ENCODE measurements at regions of chr2 and their contacts with region 1.

Region 1: GRCh38 chr2:228681426-228681825 is 499.9 kb upstream of the SPHKAP start:
- DNase-seq: no peak
- H3K4me3 Mint-ChIP-seq: no peak overlapping the region
- H3K27ac Mint-ChIP-seq: no peak overlapping the region
- H3K4me1 Mint-ChIP-seq: no peaks in the 10 kb centered on the region
- H3K27me3 Mint-ChIP-seq: no peaks in the 10 kb centered on the region
- CTCF ChIP-seq: peak; percentile 26

Region 2: GRCh38 chr2:228777855-228778355 is 96.5 kb after region 1 on chr2:
- CTCF ChIA-PET with region 1: no interaction called
- intact Hi-C with region 1: no loop called
- DNase-seq: no peak
- H3K4me3 Mint-ChIP-seq: no peak overlapping the region
- H3K27ac Mint-ChIP-seq: no peak overlapping the region
- H3K4me1 Mint-ChIP-seq: no peaks in the 10 kb centered on the region
- H3K27me3 Mint-ChIP-seq: no peaks in the 10 kb centered on the region
- CTCF ChIP-seq: no peak

Region 3: DNA sequence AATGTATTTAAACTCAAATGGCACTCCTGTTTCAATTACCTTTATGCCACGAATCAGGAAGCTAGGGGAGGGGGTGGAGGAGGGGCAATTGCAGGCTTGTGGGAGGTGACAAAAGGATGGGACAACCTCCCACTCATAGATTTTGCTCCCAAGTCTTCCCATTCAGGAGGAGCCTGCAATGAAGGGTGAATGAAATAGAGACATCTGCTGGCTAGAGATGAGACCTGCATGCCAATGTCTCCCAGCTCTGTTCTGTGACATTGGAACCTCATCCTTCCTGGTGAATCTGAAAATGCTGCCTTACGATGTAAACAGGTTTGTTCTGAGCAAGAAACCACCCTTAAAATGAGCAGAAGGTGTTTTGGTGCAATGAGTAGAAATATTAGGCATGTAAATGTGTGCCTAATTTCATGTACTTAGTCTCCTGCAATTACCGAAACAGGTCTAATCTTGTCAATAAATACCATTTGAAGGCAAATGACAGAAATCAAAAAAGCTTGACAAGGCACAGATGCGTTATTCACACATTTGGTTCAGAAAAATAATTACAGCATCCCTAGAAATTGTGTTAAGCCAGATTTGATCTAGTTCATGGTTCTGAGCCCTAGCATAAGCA is 592.4 kb after region 1 on chr2:
- CTCF ChIA-PET with region 1: no interaction called
- intact Hi-C with region 1: loop called (anchors 5 kb)
- DNase-seq: peak; percentile 60
- H3K4me3 Mint-ChIP-seq: peak overlapping the region; percentile 34
- H3K27ac Mint-ChIP-seq: no peak overlapping the region
- H3K4me1 Mint-ChIP-seq: peaks cover 22% of the 10 kb centered on the region
- H3K27me3 Mint-ChIP-seq: peaks cover 41% of the 10 kb centered on the region
- CTCF ChIP-seq: peak; percentile 68

Region 4: DNA sequence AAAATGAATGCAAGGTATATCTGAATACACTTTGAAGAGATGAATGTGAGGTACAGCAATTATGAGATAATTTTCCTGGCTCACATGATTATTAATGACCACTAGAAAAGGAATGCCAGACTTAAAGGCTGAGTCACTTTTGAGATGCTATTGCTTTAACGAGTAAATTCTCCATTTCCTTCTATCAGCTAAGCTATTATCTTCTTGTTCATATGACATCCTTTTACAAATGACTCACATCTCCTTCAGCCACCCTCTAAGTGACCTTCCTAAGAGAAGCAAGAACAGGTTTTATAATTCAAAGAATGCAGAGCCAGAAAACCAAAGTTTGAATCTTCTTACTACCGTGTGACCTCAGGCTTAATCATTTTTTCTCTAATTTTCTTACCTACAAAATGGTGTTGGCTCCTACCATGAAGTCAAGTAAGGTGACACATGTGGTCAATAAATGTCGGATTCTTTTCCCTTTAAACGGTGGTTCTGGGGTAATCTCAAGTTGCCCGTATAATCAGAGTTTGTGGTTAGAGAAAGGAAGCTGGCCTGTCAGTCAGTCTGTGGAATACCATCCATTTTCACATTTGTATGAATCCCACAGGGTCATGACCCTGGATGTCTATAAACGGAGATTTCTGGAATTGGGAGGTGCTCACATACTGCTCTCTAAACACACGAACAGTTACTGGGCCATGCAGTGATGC is 773.7 kb after region 1 on chr2:
- CTCF ChIA-PET with region 1: no interaction called
- intact Hi-C with region 1: loop called (anchors 10 kb)
- DNase-seq: no peak
- H3K4me3 Mint-ChIP-seq: no peak overlapping the region
- H3K27ac Mint-ChIP-seq: peak overlapping the region; percentile 2
- H3K4me1 Mint-ChIP-seq: peaks cover 8% of the 10 kb centered on the region
- H3K27me3 Mint-ChIP-seq: no peaks in the 10 kb centered on the region
- CTCF ChIP-seq: no peak

Measured in Calu3 (cell line).